Activated CD4-positive, alpha-beta T cell treated with anti-CD3 and anti-CD28 coated beads for 36 hours (primary cell): ENCODE measurements at regions of chr17 and their contacts with region 1.

Region 1: DNA sequence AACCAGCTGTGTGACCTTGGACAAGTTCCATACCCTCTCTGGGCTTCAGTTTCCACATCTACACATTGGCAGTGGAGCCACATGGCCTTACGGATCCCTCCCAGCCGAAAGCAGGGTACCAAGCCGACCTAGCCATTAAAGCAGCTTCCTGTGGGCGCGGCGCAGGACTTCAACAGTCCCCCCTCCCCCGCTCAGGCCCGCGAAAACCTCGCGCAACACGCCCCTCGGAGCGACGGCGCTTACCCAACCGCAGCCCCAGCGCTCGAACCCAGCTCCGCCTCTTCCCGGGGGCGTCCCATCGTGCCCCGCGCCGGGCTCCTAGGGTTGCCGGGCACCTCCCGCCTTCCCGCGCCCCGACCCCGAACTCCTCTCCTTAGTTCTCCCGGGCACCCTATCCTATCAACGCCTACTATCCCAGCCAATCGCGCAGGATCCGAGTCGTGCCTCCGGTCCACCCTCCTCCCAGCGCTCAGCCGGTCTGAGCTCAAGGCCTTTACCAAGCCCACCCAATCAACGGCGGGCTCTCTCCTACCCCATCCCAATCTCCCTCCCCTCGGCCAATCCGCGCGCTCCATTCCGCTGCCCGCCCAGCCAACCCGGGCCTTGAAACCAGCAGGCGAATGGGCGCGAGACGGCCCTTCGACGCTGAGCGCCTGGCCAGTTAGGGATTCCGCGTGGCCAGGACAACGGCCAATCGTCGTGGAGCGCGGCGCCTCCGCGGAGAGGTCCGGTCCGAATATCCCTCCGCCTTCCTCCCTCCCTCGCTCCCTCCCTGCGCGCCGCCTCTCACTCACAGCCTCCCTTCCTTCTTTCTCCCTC is at the start of gene KPNB1:
- DNase-seq: peak; percentile 99
- ATAC-seq: peak; percentile 86
- H3K4me3 Mint-ChIP-seq: peak within 1 kb of the TSS; percentile 98
- H3K27ac Mint-ChIP-seq: peak within 1 kb of the TSS; percentile 96
- H3K4me1 Mint-ChIP-seq: peaks cover 52% of the 10 kb centered on the region
- H3K27me3 Mint-ChIP-seq: no peaks in the 10 kb centered on the region
- total RNA-seq, gene KPNB1: 640 to 656 TPM

Region 2: DNA sequence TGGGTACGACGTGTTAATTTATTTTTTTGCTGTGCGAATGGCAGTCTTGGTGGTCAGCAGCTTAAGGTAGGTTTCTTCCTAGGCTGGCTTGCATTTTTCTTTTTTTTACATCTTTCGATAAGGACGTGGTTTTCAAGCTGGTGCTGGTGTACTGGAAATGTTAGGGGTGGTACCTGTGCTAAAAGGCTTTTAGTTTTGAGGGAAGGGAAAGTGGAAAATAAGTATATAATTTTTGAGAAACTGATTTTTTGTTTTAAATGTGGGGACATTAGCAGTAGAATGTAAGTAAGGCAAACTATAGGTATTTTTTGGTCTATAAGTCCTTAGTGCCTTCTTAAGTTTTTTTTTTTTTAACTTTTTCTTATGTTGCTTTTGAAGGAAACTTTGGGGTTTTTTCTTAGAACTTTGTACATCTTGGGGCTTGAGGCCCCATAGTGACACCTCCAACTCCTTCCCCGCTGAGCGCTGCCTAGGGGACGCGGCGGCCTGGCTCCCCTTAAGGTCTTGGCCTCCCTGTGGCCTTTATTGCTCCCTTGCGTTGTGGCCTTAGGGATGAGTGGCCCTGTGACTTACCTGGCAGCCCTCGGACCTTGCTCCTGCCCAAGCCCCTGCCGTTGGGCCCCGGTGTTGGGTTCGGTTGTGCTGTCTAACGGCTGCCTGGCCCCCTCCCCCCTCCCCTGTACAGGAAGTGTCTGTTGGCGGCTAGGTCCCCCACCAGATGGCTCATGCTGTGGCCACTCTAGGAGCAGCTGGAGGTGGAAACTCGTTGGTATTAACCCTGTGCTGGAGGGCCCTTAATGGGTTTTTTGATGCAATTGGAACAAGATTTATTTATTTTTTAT is 582.3 kb before region 1 on chr17:
- CTCF ChIA-PET with region 1: no interaction called
- POLR2A ChIA-PET with region 1: no interaction called
- intact Hi-C with region 1: loop called in 1 of 2 experiments (anchors 1 kb)
- DNase-seq: peak; percentile 90
- ATAC-seq: peak; percentile 96
- H3K4me3 Mint-ChIP-seq: peak overlapping the region; percentile 83
- H3K27ac Mint-ChIP-seq: peak overlapping the region; percentile 95
- H3K4me1 Mint-ChIP-seq: peaks cover 30% of the 10 kb centered on the region
- H3K27me3 Mint-ChIP-seq: no peaks in the 10 kb centered on the region

Region 3: GRCh38 chr17:47615766-47616424 is 33.5 kb before region 1 on chr17:
- CTCF ChIA-PET with region 1: interaction called, 8 read pairs
- POLR2A ChIA-PET with region 1: no interaction called
- intact Hi-C with region 1: loop called in 1 of 2 experiments (anchors 1 kb)
- DNase-seq: no peak
- ATAC-seq: peak; percentile 34
- H3K4me3 Mint-ChIP-seq: no peak overlapping the region
- H3K27ac Mint-ChIP-seq: no peak overlapping the region
- H3K4me1 Mint-ChIP-seq: peaks cover 11% of the 10 kb centered on the region
- H3K27me3 Mint-ChIP-seq: no peaks in the 10 kb centered on the region

Region 4: GRCh38 chr17:47636273-47637030 is 12.9 kb before region 1 on chr17:
- CTCF ChIA-PET with region 1: no interaction called
- POLR2A ChIA-PET with region 1: no interaction called
- intact Hi-C with region 1: no loop called
- DNase-seq: no peak
- ATAC-seq: no peak
- H3K4me3 Mint-ChIP-seq: no peak overlapping the region
- H3K27ac Mint-ChIP-seq: no peak overlapping the region
- H3K4me1 Mint-ChIP-seq: peaks cover 8% of the 10 kb centered on the region
- H3K27me3 Mint-ChIP-seq: no peaks in the 10 kb centered on the region

Region 5: DNA sequence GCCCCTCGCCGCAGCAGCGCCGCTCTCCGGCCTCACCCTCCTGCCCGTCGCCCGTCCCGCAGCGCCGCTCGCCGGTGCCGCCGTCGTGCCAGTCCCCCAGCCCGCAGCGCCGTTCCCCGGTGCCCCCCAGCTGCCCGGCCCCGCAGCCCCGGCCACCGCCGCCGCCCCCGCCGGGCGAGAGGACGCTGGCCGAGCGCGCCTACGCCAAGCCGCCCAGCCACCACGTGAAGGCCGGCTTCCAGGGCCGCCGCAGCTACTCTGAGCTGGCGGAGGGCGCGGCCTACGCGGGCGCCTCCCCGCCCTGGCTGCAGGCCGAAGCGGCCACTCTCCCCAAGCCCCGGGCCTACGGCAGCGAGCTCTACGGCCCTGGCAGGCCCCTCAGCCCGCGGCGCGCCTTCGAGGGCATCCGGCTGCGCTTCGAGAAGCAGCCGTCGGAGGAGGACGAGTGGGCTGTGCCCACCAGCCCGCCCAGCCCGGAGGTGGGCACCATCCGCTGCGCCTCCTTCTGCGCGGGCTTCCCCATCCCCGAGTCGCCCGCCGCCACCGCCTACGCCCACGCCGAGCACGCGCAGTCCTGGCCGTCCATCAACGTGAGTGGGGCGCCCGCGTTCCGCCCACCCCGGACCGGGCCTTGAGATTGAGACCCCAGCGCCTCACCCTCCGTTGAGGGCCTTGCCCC is 59.6 kb after region 1 on chr17:
- CTCF ChIA-PET with region 1: interaction called, 5 read pairs
- POLR2A ChIA-PET with region 1: no interaction called
- intact Hi-C with region 1: loop called in 1 of 2 experiments (anchors 1 kb)
- DNase-seq: no peak
- ATAC-seq: no peak
- H3K4me3 Mint-ChIP-seq: no peak overlapping the region
- H3K27ac Mint-ChIP-seq: no peak overlapping the region
- H3K4me1 Mint-ChIP-seq: peaks cover 62% of the 10 kb centered on the region
- H3K27me3 Mint-ChIP-seq: no peaks in the 10 kb centered on the region

Region 6: GRCh38 chr17:47831003-47831933 is 181.9 kb after region 1 on chr17 and contains the starts of genes LRRC46 and MRPL10:
- CTCF ChIA-PET with region 1: no interaction called
- POLR2A ChIA-PET with region 1: no interaction called
- intact Hi-C with region 1: loop called in 1 of 2 experiments (anchors 1 kb)
- DNase-seq: peak; percentile 96
- ATAC-seq: peak; percentile 94
- H3K4me3 Mint-ChIP-seq: peak within 1 kb of the TSS; percentile 88
- H3K27ac Mint-ChIP-seq: peak within 1 kb of the TSS; percentile 88
- H3K4me1 Mint-ChIP-seq: peaks cover 57% of the 10 kb centered on the region
- H3K27me3 Mint-ChIP-seq: no peaks in the 10 kb centered on the region
- total RNA-seq, gene LRRC46: 0.46 to 0.82 TPM
- total RNA-seq, gene MRPL10: 66.9 to 70.9 TPM

Region 7: GRCh38 chr17:47970704-47971463 is 321.5 kb after region 1 on chr17 and contains the start of gene CDK5RAP3:
- CTCF ChIA-PET with region 1: no interaction called
- POLR2A ChIA-PET with region 1: no interaction called
- intact Hi-C with region 1: loop called in 1 of 2 experiments (anchors 2 kb)
- DNase-seq: peak; percentile 100
- ATAC-seq: peak; percentile 100
- H3K4me3 Mint-ChIP-seq: peak within 1 kb of the TSS; percentile 97
- H3K27ac Mint-ChIP-seq: peak within 1 kb of the TSS; percentile 94
- H3K4me1 Mint-ChIP-seq: peaks cover 21% of the 10 kb centered on the region
- H3K27me3 Mint-ChIP-seq: no peaks in the 10 kb centered on the region
- total RNA-seq, gene CDK5RAP3: 147 to 156 TPM

Region 8: DNA sequence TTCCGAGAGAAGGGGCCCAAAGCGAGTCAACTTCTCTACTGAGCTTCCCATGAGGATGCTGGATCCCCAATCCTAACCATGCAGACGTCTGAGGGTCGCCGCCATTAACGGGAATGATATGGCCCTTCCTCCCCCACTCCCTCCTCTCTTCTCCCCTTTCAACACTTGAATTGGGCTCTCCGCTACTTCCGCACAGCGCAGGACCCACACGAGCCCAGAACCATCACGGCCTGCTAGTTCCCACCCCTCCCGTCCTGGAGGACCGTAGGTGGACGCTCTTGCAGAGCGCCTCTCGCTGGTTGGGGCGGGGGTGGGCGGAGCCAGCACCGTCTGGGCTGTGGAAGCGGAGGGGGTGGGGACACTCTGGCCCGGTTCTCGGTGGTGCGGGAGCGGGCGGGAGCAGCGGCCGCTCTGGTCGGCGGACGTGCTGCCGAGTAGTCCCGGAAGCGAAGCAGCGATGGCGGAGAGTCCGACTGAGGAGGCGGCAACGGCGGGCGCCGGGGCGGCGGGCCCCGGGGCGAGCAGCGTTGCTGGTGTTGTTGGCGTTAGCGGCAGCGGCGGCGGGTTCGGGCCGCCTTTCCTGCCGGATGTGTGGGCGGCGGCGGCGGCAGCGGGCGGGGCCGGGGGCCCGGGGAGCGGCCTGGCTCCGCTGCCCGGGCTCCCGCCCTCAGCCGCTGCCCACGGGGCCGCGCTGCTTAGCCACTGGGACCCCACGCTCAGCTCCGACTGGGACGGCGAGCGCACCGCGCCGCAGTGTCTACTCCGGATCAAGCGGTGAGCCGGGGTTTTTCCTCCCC is 1258.9 kb after region 1 on chr17 and contains the start of gene UBE2Z:
- CTCF ChIA-PET with region 1: no interaction called
- POLR2A ChIA-PET with region 1: no interaction called
- intact Hi-C with region 1: loop called in 1 of 2 experiments (anchors 2 kb)
- DNase-seq: peak; percentile 94
- ATAC-seq: peak; percentile 86
- H3K4me3 Mint-ChIP-seq: peak within 1 kb of the TSS; percentile 89
- H3K27ac Mint-ChIP-seq: peak within 1 kb of the TSS; percentile 97
- H3K4me1 Mint-ChIP-seq: peaks cover 46% of the 10 kb centered on the region
- H3K27me3 Mint-ChIP-seq: no peaks in the 10 kb centered on the region
- total RNA-seq, gene UBE2Z: 104 TPM